Heart left ventricle (tissue), 16 donors: ENCODE measurements at regions of chr11 and their contacts with region 1.

Region 1: GRCh38 chr11:27183672-27184457 is 143.2 kb downstream of the BBOX1 start:
- DNase-seq: peak in 4 of 5 donors; percentile 37 to 44 (median 43)
- ATAC-seq: peak in 2 of 4 donors; percentile 33 to 59
- H3K4me3 ChIP-seq: no peak overlapping the region
- H3K27ac ChIP-seq: no peak overlapping the region
- H3K4me1 ChIP-seq: peaks cover 0 to 5% (median 0%) of the 10 kb centered on the region in 12 donors
- H3K27me3 ChIP-seq: peaks cover 0 to 5% (median 0%) of the 10 kb centered on the region in 9 donors
- CTCF ChIP-seq: peak; percentile 50 to 86 (median 76)
- POLR2A ChIP-seq: no peak

Region 2: DNA sequence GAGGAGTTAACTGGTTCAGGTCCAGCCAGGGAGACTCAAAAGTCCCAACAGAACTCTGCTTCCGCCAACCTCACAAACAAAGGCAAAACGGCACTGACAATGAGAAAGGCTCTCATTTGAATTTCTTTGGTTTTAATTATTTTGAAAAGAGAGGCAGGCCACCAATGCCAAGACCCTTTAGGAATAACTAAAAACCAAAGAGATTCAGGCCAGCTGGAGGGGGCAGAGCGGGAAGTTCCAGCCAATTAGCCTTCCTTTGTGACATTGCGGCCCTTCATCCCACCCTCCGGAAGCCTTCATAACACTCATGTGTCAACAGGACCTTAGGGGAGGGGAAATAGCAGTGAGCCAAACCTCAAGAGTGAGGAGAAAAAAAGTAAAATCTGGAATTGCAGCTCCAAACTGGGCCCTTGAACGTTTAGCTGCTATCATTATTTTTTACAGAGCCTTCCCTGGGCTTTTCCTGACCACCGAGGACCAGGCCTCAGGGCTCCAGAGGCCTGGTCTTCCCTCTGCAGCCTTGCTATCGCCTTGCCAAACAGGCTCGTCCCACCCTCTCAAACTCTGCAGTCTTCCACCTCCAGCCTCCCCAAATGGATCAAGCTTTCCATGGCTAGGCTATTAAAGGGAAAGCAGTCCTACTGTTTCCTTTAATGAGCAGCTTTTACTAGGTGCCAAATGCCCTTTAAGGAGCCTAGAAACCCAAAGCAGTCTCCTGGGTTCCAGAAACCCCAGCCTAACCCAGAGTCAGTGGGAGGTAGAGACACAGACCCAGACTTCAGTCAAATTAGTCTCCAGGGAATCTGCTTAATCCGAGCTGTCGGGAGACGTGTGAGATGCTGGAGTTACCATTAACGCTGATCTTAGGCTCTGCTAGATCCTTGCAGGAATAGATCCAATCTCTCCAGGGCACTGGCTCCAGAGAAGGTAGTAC is 65.0 kb after region 1 on chr11:
- intact Hi-C with region 1: loop called in 1 of 10 experiments (anchors 2 kb)
- DNase-seq: peak in 4 of 5 donors; percentile 37 to 56 (median 45)
- ATAC-seq: peak; percentile 27 to 80 (median 74)
- H3K4me3 ChIP-seq: no peak overlapping the region
- H3K27ac ChIP-seq: peak overlapping the region in 9 of 12 donors; percentile 21 to 75 (median 64)
- H3K4me1 ChIP-seq: peaks cover 0 to 44% (median 16%) of the 10 kb centered on the region in 12 donors
- H3K27me3 ChIP-seq: no peaks in the 10 kb centered on the region
- CTCF ChIP-seq: no peak
- POLR2A ChIP-seq: no peak

Region 3: DNA sequence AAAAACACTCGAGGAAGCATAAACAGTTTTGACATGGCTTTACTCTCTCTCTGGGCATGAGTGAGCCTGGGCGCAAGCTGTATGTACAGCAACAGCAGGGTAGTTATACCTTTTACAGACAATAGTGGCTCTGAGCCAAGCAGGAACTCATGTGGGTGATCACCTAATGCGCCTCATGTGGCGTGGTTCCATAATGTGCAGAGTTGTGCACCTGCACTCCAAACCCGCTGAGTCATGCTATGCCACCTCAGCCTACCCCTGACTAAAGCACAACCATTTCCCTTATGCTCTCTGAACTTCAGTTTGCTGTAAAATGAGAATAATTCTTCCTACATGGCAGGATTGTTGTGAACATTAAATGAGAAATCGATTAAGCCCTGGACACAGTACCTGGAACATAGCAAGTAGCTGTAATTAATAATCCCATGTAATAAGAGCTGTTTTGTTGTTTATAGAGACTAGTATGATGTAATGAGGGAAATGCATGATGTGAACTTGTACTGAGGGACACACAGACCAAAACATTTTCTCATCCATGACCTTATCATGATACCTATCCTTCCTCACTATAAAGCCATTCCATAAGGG is 107.5 kb after region 1 on chr11:
- intact Hi-C with region 1: loop called (anchors 1 to 10 kb)
- DNase-seq: no peak
- ATAC-seq: no peak
- H3K4me3 ChIP-seq: no peak overlapping the region
- H3K27ac ChIP-seq: no peak overlapping the region
- H3K4me1 ChIP-seq: peaks cover 0 to 6% (median 0%) of the 10 kb centered on the region in 12 donors
- H3K27me3 ChIP-seq: no peaks in the 10 kb centered on the region
- CTCF ChIP-seq: no peak
- POLR2A ChIP-seq: no peak

Region 4: DNA sequence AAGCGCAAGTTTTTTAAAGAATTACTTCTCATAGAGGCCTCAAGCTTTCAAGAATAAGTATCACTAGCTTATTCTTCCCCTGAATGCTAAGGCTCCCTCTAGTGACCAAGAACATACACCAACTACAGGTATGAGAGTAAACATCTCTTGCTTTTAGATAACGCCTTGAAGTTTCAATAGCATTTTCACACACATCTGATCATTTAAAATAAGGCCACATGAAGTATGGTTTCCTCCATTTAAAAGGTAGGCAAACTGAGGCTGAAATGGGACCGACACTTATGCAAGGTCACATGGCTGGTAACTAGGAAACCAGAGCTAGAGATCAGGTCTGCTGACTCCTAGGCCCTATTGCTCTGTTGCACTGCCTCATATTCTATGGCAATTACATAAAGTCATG is 112.6 kb after region 1 on chr11:
- intact Hi-C with region 1: loop called (anchors 1 to 10 kb)
- DNase-seq: no peak
- ATAC-seq: peak in 2 of 4 donors; percentile 53 to 73
- H3K4me3 ChIP-seq: no peak overlapping the region
- H3K27ac ChIP-seq: peak overlapping the region in 5 of 12 donors; percentile 5 to 62 (median 29)
- H3K4me1 ChIP-seq: peaks cover 0 to 8% (median 0%) of the 10 kb centered on the region in 12 donors
- H3K27me3 ChIP-seq: no peaks in the 10 kb centered on the region
- CTCF ChIP-seq: peak; percentile 44 to 73 (median 60)
- POLR2A ChIP-seq: no peak

Region 5: DNA sequence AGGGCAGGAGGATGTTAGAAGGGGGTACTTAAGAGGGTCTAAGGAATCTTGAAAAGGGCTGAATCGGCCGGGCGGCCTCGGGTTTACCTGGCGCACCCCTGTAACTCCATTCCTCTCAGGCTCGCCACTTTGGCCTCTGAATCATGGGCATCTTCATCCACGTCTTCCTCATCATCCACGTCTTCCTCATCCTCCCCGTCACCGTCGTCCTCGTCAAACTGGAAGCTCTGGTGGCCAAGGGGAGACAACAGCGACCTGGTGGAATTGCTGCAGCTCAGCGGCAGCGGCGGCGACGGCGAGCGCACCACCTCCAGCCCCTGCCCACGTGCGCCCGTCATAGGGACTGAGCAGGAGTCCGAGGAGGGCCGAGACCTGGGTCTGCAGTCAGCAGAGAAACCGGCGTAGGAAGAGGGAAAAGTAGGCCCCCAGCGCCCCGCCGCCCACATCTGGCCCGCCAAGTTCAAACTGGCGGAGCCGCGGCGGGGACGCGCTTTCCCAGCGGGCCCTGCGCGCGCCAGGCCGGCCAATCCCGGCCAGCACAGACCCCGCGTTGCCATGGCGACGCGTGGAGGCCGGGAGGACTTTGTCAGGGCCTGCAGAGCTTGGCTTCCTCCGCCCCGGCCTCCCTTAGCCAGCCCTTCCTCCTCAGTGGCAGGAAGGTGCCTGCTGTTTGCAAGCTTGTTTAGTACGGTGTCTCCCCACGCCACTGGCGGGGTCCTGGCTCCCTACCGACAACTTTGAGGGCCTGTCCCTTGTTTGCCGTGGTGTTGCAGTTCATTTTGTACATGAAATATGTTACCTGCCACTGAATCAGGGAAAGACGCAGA is 179.1 kb after region 1 on chr11 and contains the start of gene CCDC34:
- intact Hi-C with region 1: loop called in 1 of 10 experiments (anchors 10 kb)
- DNase-seq: peak; percentile 90 to 96 (median 94)
- ATAC-seq: peak; percentile 99 to 100 (median 100)
- H3K4me3 ChIP-seq: peak within 1 kb of the TSS; percentile 37 to 89 (median 76)
- H3K27ac ChIP-seq: peak within 1 kb of the TSS in 8 of 12 donors; percentile 3 to 56 (median 40)
- H3K4me1 ChIP-seq: peaks cover 0 to 18% (median 10%) of the 10 kb centered on the region in 12 donors
- H3K27me3 ChIP-seq: no peaks in the 10 kb centered on the region
- CTCF ChIP-seq: no peak
- POLR2A ChIP-seq: no peak
- total RNA-seq, gene CCDC34: 1.1 to 8.3 (median 3.2) TPM

Region 6: GRCh38 chr11:27477831-27478230 is 294.0 kb after region 1 on chr11:
- intact Hi-C with region 1: loop called in 2 of 10 experiments (anchors 2 to 5 kb)
- DNase-seq: no peak
- ATAC-seq: no peak
- H3K4me3 ChIP-seq: no peak overlapping the region
- H3K27ac ChIP-seq: no peak overlapping the region
- H3K4me1 ChIP-seq: peaks cover 0 to 4% (median 0%) of the 10 kb centered on the region in 12 donors
- H3K27me3 ChIP-seq: no peaks in the 10 kb centered on the region
- CTCF ChIP-seq: no peak
- POLR2A ChIP-seq: no peak